ENCODE measurements at regions of chr12 and their contacts with region 1.

Region 1: GRCh38 chr12:100234598-100235304 is 32.1 kb downstream of the DEPDC4 start:
- DNase-seq: no peak
- ATAC-seq: peak; percentile 56 to 61
- H3K4me3 ChIP-seq: no peak overlapping the region
- H3K27ac ChIP-seq: peak overlapping the region in 2 of 4 donors; percentile 13 to 19
- H3K4me1 ChIP-seq: no peaks in the 10 kb centered on the region
- H3K27me3 ChIP-seq: no peaks in the 10 kb centered on the region
- CTCF ChIP-seq: peak; percentile 12 to 74 (median 59)
- POLR2A ChIP-seq: no peak

Region 2: DNA sequence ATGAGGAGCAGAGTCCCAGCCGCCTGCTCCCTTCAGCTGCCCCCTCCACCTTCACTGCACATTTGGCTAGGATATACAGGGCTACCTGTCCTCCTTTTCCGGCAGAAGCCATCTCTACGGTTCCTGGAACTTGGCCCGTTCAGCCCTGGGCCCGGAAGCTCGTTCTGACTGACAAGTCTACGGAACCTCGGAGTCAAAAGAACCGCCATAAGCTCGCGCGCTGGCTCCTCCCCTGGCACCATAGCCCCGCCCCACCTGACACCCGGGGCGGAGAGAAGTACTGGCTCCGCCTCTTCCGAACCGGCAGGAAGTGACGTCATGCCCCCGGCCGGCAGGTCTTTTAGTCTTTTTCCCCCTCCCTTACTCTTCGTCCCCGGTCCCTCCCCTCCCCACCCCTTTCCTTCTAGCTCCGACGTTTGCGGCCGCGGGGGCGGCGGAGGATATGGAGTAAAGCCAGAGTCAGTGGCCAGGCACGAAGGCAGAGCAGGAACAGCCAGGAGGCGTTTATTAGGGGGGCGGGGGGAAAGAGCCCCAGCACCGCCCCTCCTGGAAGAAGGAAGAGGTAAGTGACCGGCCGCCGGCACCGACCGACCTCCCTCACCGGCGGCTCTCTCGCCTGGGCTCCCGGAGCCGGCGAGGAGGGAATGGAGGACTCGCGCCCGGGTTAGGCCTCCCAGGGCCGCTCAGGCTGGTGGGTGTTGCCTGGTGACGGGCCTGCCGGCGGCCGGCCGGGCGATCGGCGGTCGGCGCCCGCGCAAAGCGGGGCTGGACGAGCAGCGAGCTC is 32.3 kb after region 1 on chr12 and contains the starts of genes DEPDC4 and SCYL2:
- in situ Hi-C with region 1: no loop called
- intact Hi-C with region 1: loop called (anchors 2 kb)
- DNase-seq: peak; percentile 93 to 95
- ATAC-seq: peak; percentile 94
- H3K4me3 ChIP-seq: peak within 1 kb of the TSS; percentile 84 to 98 (median 86)
- H3K27ac ChIP-seq: peak within 1 kb of the TSS; percentile 91 to 96 (median 95)
- H3K4me1 ChIP-seq: peaks cover 24% of the 10 kb centered on the region in 2 donors
- H3K27me3 ChIP-seq: no peaks in the 10 kb centered on the region
- CTCF ChIP-seq: peak in 1 of 5 experiments; percentile 28
- POLR2A ChIP-seq: peak; percentile 61 to 76
- total RNA-seq, gene DEPDC4: not detected
- total RNA-seq, gene SCYL2: 28.9 to 44.9 (median 33.3) TPM

Region 3: GRCh38 chr12:100554608-100555077 is 319.9 kb after region 1 on chr12:
- in situ Hi-C with region 1: loop called in 3 of 4 experiments (anchors 25 kb)
- intact Hi-C with region 1: loop called (anchors 5 kb)
- DNase-seq: no peak
- ATAC-seq: peak; percentile 46 to 54
- H3K4me3 ChIP-seq: no peak overlapping the region
- H3K27ac ChIP-seq: no peak overlapping the region
- H3K4me1 ChIP-seq: no peaks in the 10 kb centered on the region
- H3K27me3 ChIP-seq: no peaks in the 10 kb centered on the region
- CTCF ChIP-seq: peak; percentile 41 to 70 (median 52)
- POLR2A ChIP-seq: no peak

Region 4: DNA sequence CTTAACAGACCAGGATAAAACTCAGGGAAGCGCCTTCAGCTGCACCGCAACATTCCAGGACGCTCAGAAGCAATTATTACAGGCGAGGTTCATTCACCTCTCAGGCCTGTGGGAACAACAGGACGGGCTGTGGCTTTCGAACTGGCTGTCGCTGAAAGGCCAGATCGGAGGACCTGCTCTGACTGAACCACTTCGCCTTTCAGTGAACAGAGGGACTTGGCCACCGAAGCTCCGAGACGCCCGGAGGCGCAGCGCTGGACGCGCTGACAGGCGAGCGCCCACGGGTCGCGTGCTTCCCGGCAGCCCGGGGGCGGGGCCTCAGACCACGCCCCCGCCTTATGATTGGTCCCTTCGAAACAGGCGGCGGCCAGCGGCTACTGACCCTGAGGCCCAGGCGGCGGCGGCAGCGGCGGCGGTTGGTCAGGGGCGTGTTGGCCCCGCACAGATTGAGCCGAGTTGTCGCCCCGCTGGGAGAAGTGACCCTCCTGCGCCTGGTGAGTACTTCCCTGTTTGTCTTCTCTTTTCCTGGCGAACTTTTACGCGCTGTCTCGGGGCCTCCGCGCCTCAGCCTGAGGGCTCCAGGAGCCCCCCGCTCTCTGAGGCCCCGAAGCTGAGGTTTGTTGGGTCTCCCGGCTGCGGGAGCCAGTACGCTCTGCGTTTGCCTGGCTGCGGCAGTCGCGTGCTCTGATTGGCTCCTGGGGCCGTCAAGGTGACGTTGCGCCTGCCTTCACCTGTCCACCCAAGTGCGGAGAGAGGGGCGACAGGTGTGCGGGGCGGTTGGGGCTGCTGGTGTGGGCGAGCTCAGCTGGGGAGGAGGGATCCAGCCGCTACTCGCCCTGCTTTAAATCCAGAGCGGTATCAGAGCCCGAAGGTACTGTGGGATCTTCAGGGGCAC is 338.8 kb after region 1 on chr12 and contains the start of gene GAS2L3:
- in situ Hi-C with region 1: loop called in 3 of 4 experiments (anchors 25 kb)
- intact Hi-C with region 1: no loop called
- DNase-seq: peak; percentile 69 to 71
- ATAC-seq: peak; percentile 91 to 92
- H3K4me3 ChIP-seq: peak within 1 kb of the TSS; percentile 62 to 89 (median 72)
- H3K27ac ChIP-seq: peak within 1 kb of the TSS; percentile 54 to 69 (median 68)
- H3K4me1 ChIP-seq: peaks cover 15 to 16% of the 10 kb centered on the region in 2 donors
- H3K27me3 ChIP-seq: peaks cover 0 to 3% (median 2%) of the 10 kb centered on the region in 3 donors
- CTCF ChIP-seq: no peak
- POLR2A ChIP-seq: peak; percentile 38 to 74
- total RNA-seq, gene GAS2L3: 0.12 to 3.8 (median 0.51) TPM

Region 5: GRCh38 chr12:100733817-100734593 is 499.3 kb after region 1 on chr12:
- in situ Hi-C with region 1: loop called in 3 of 4 experiments (anchors 10 to 25 kb)
- intact Hi-C with region 1: no loop called
- DNase-seq: no peak
- ATAC-seq: no peak
- H3K4me3 ChIP-seq: no peak overlapping the region
- H3K27ac ChIP-seq: no peak overlapping the region
- H3K4me1 ChIP-seq: no peaks in the 10 kb centered on the region
- H3K27me3 ChIP-seq: no peaks in the 10 kb centered on the region
- CTCF ChIP-seq: no peak
- POLR2A ChIP-seq: no peak

Region 6: GRCh38 chr12:100741084-100741711 is 506.4 kb after region 1 on chr12:
- in situ Hi-C with region 1: loop called in 3 of 4 experiments (anchors 10 to 25 kb)
- intact Hi-C with region 1: loop called (anchors 2 kb)
- DNase-seq: no peak
- ATAC-seq: no peak
- H3K4me3 ChIP-seq: no peak overlapping the region
- H3K27ac ChIP-seq: no peak overlapping the region
- H3K4me1 ChIP-seq: no peaks in the 10 kb centered on the region
- H3K27me3 ChIP-seq: no peaks in the 10 kb centered on the region
- CTCF ChIP-seq: peak in 2 of 5 experiments; percentile 20 to 50
- POLR2A ChIP-seq: no peak

Measured in gastrocnemius medialis (tissue), 4 donors.